Kidney (tissue), 22 donors: ENCODE measurements at regions of chr17 and their contacts with region 1.

Region 1: DNA sequence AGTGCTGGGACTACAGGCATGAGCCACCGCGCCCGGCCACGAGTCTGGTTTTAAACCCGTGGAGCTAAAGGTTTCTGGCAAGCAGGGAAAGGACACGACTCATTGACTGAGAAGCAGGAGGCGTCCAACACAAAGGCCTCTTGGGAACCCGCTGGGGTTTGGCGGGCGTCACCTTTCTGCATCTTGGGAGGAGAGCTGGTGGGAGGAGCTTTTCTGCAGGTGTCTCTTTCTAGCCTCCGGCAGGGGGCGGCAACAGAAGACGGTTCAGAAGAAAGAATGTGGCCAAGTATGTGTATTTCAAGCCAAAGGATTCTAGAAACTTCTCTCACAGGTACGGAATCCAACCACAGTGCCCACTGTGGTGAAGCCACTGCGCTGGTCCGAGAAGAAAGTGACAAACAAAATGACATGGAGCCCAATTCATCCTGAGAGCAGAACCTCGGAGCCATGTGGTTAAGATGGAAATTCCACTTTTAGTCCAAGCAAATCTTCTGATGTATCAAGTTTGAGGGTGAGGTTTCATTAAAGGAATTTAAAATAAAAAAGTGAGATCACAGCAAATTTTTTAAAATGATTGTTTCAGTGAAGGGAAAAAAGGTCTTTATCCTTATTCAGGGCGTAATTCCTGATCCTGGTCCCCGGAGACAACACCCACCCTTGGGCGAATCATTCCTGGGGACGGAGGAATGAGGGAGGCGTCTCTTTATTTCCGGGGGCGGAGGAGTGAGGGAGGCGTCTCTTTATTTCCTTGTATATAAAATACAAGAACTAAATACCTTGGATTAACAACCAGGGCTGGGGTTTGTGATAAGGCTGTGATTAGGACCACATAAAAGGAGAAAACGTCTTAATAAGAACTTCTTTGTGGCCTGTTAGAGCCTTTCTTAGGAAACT is 97.6 kb downstream of the MRM3 start:
- DNase-seq: peak; percentile 81 to 94 (median 83)
- H3K4me3 ChIP-seq: no peak overlapping the region
- H3K27ac ChIP-seq: peak overlapping the region; percentile 32 to 71
- H3K4me1 ChIP-seq: peaks cover 0 to 6% (median 0%) of the 10 kb centered on the region in 3 donors
- H3K27me3 ChIP-seq: no peaks in the 10 kb centered on the region
- CTCF ChIP-seq: peak; percentile 50

Region 2: GRCh38 chr17:760371-760770 is 119.4 kb before region 1 on chr17:
- intact Hi-C with region 1: no loop called
- DNase-seq: no peak
- H3K4me3 ChIP-seq: no peak overlapping the region
- H3K27ac ChIP-seq: no peak overlapping the region
- H3K4me1 ChIP-seq: no peaks in the 10 kb centered on the region
- H3K27me3 ChIP-seq: no peaks in the 10 kb centered on the region
- CTCF ChIP-seq: no peak

Region 3: DNA sequence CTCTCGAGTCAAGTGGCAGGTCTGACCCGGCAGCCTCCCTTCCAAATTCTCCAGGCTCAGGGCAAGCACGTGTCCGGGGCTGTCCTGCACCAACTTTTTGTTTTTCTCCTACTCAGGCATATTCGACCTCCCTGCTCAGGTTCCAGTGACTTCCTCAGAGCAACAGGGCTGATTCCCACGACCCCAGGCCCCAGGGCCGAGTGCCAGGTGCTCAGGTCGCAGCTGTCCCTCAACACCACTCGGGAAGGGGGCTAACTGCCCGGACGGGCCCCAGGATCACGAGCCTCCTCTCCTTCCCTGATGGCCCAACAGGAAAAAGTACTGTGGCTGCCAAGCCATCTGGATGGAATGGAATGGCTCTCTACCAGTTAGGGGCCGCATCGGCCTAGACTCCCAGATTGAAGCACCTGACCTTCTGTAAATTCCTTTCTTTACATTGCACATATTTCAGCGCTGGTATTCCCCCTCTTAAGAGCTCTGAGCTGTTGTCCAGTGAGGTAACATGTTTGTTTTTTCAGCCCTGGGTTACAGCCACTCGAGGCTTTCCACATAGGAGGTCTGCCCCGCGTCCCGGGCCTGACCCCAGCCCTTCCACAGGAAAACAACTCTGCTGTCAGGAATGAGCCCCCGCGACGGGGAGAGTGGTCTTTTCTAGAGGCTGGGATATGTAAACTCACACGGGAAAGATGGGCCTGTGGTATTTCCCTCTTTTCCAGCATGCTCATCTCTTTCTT is 74.8 kb after region 1 on chr17:
- intact Hi-C with region 1: no loop called
- DNase-seq: peak in 4 of 5 donors; percentile 62 to 83 (median 68)
- H3K4me3 ChIP-seq: no peak overlapping the region
- H3K27ac ChIP-seq: no peak overlapping the region
- H3K4me1 ChIP-seq: peaks cover 0 to 3% (median 0%) of the 10 kb centered on the region in 3 donors
- H3K27me3 ChIP-seq: no peaks in the 10 kb centered on the region
- CTCF ChIP-seq: no peak

Region 4: GRCh38 chr17:979538-980405 is 100.0 kb after region 1 on chr17 and contains the start of gene NXN:
- intact Hi-C with region 1: loop called (anchors 10 kb)
- DNase-seq: peak; percentile 81 to 97 (median 93)
- H3K4me3 ChIP-seq: peak within 1 kb of the TSS; percentile 16 to 58 (median 44)
- H3K27ac ChIP-seq: peak within 1 kb of the TSS; percentile 67 to 86
- H3K4me1 ChIP-seq: peaks cover 0 to 8% (median 0%) of the 10 kb centered on the region in 3 donors
- H3K27me3 ChIP-seq: no peaks in the 10 kb centered on the region
- CTCF ChIP-seq: no peak
- total RNA-seq, gene NXN: 26.8 TPM